ENCODE measurements at regions of chr11 and their contacts with region 1.

Region 1: GRCh38 chr11:75204685-75205563 is 35.6 kb upstream of the TPBGL start:
- DNase-seq: peak; percentile 75 to 82 (median 79)
- H3K4me3 ChIP-seq: no peak overlapping the region
- H3K4me3 Mint-ChIP-seq: no peak overlapping the region
- H3K27ac ChIP-seq: no peak overlapping the region
- H3K27ac Mint-ChIP-seq: no peak overlapping the region
- H3K4me1 ChIP-seq: no peaks in the 10 kb centered on the region
- H3K4me1 Mint-ChIP-seq: no peaks in the 10 kb centered on the region
- H3K27me3 ChIP-seq: peaks cover 0 to 6% of the 10 kb centered on the region in 2 donors
- H3K27me3 Mint-ChIP-seq: peaks cover 10 to 15% (median 13%) of the 10 kb centered on the region in 3 donors
- CTCF ChIP-seq: peak; percentile 93

Region 2: DNA sequence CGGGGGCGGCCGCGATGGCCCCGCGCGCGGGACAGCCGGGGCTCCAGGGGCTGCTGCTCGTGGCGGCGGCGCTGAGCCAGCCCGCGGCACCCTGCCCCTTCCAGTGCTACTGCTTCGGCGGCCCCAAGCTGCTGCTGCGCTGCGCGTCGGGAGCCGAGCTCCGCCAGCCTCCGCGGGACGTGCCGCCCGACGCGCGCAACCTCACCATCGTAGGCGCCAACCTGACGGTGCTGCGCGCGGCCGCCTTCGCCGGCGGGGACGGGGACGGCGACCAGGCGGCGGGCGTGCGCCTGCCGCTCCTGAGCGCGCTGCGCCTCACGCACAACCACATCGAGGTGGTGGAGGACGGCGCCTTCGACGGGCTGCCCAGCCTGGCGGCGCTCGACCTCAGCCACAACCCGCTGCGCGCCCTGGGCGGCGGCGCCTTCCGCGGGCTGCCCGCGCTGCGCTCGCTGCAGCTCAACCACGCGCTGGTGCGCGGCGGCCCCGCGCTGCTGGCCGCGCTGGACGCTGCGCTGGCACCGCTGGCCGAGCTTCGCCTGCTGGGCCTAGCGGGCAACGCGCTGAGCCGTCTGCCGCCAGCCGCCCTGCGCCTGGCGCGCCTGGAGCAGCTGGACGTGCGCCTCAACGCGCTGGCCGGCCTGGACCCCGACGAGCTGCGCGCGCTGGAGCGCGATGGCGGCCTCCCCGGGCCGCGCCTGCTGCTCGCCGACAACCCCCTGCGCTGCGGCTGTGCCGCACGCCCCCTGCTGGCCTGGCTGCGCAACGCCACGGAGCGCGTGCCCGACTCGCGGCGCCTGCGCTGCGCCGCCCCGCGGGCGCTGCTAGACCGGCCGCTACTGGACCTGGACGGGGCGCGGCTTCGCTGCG is 36.3 kb after region 1 on chr11:
- intact Hi-C with region 1: loop called in 1 of 2 experiments (anchors 5 kb)
- DNase-seq: peak; percentile 80 to 83 (median 83)
- H3K4me3 ChIP-seq: peak overlapping the region in 1 of 3 experiments; percentile 59
- H3K4me3 Mint-ChIP-seq: peak overlapping the region; percentile 64 to 80
- H3K27ac ChIP-seq: no peak overlapping the region
- H3K27ac Mint-ChIP-seq: no peak overlapping the region
- H3K4me1 ChIP-seq: peaks cover 8 to 22% of the 10 kb centered on the region in 2 donors
- H3K4me1 Mint-ChIP-seq: peaks cover 8% of the 10 kb centered on the region
- H3K27me3 ChIP-seq: peaks cover 44 to 66% of the 10 kb centered on the region in 2 donors
- H3K27me3 Mint-ChIP-seq: peaks cover 54 to 70% (median 68%) of the 10 kb centered on the region in 3 donors
- CTCF ChIP-seq: peak; percentile 96

Measured in CD14-positive monocyte (primary cell).